Gastrocnemius medialis (tissue), 4 donors: ENCODE measurements at regions of chr4 and their contacts with region 1.

Region 1: DNA sequence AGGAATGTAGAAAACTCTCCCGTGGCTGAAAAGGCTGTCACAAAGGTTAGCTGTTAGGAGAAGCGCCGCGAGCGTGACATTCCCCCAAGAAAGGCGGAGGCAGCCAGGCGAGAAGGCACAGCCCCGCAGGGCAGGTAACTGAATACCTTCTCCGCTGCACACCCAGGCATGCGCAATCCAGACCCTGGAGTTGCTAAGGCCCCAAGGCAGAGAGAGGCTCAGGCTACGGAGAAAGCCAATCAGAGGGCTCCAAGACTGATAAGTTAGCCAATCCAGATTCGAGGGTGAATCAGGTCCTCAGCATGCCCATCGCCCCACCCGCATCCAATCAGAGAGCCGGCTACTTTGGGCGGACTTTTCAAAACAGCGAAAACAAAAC is 485 bp upstream of the CCNG2 start:
- DNase-seq: peak; percentile 96 to 98
- ATAC-seq: peak; percentile 99
- H3K4me3 ChIP-seq: peak overlapping the region; percentile 73 to 92 (median 82)
- H3K27ac ChIP-seq: peak overlapping the region; percentile 76 to 87 (median 83)
- H3K4me1 ChIP-seq: peaks cover 0 to 19% of the 10 kb centered on the region in 2 donors
- H3K27me3 ChIP-seq: no peaks in the 10 kb centered on the region
- CTCF ChIP-seq: no peak
- POLR2A ChIP-seq: no peak

Region 2: GRCh38 chr4:75514131-75514948 is 1642.2 kb before region 1 on chr4 and contains the starts of genes RCHY1 and THAP6:
- in situ Hi-C with region 1: no loop called
- intact Hi-C with region 1: loop called (anchors 2 kb)
- DNase-seq: peak; percentile 95
- ATAC-seq: peak; percentile 96 to 98
- H3K4me3 ChIP-seq: peak within 1 kb of the TSS; percentile 86 to 93 (median 88)
- H3K27ac ChIP-seq: peak within 1 kb of the TSS; percentile 95 to 96 (median 95)
- H3K4me1 ChIP-seq: peaks cover 50 to 57% of the 10 kb centered on the region in 2 donors
- H3K27me3 ChIP-seq: no peaks in the 10 kb centered on the region
- CTCF ChIP-seq: peak in 3 of 5 experiments; percentile 9 to 37 (median 15)
- POLR2A ChIP-seq: peak; percentile 74 to 82
- total RNA-seq, gene RCHY1: 14.0 to 18.7 (median 15.8) TPM
- total RNA-seq, gene THAP6: 6.0 to 27.3 (median 13.9) TPM

Region 3: DNA sequence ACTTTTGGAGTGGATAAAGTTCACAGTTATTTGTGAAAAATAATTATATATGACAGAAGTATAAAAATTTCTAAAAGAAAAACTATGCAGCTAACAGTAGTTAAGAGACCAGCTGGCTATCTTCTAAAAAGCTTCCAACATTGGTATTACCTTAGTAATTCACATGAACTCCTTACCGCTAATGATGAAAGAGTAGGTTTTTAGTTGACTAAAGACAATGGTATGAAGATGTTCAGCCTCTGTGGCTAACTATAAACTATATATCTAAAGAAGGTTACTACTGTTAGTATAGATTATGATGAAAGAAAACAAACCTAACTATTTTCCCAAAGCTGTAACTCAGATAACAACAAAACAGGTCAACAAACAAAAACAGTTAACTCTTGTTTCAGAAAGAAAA is 91.1 kb before region 1 on chr4:
- in situ Hi-C with region 1: no loop called
- intact Hi-C with region 1: no loop called
- DNase-seq: no peak
- ATAC-seq: no peak
- H3K4me3 ChIP-seq: no peak overlapping the region
- H3K27ac ChIP-seq: no peak overlapping the region
- H3K4me1 ChIP-seq: peaks cover 6 to 15% of the 10 kb centered on the region in 2 donors
- H3K27me3 ChIP-seq: no peaks in the 10 kb centered on the region
- CTCF ChIP-seq: no peak
- POLR2A ChIP-seq: no peak

Region 4: GRCh38 chr4:77095101-77095821 is 61.3 kb before region 1 on chr4:
- in situ Hi-C with region 1: loop called in 1 of 4 experiments (anchors 10 kb)
- intact Hi-C with region 1: loop called (anchors 5 kb)
- DNase-seq: peak; percentile 54 to 72
- ATAC-seq: peak; percentile 82 to 96
- H3K4me3 ChIP-seq: no peak overlapping the region
- H3K27ac ChIP-seq: no peak overlapping the region
- H3K4me1 ChIP-seq: peaks cover 0 to 10% of the 10 kb centered on the region in 2 donors
- H3K27me3 ChIP-seq: no peaks in the 10 kb centered on the region
- CTCF ChIP-seq: peak; percentile 72 to 85 (median 78)
- POLR2A ChIP-seq: no peak

Region 5: GRCh38 chr4:77190053-77190452 is 33.5 kb after region 1 on chr4:
- in situ Hi-C with region 1: no loop called
- intact Hi-C with region 1: no loop called
- DNase-seq: no peak
- ATAC-seq: no peak
- H3K4me3 ChIP-seq: no peak overlapping the region
- H3K27ac ChIP-seq: no peak overlapping the region
- H3K4me1 ChIP-seq: peaks cover 0 to 5% of the 10 kb centered on the region in 2 donors
- H3K27me3 ChIP-seq: no peaks in the 10 kb centered on the region
- CTCF ChIP-seq: no peak
- POLR2A ChIP-seq: no peak